ENCODE measurements at regions of chr20 and their contacts with region 1.

Region 1: DNA sequence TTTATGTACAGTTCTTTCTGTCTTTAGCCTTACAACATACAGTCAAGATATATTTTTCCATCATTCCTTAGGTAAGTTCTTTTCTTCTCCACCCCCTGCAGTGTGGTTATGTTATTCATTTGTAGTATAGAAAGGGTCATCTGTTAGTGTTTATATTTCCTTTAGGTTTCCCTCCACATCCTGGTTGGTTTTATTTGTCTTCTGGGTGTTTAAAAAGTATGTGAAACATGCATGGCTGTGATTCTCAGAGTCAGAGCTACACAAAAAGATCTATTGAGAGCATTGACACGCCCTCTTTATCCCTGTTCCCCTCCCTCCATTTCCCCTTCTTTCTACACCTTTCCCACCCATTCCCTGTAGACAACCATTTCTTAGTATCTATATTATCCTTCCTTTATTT is 20.2 kb downstream of the DHX35 start:
- DNase-seq: peak; percentile 90
- ATAC-seq: peak; percentile 60
- H3K4me3 ChIP-seq: no peak overlapping the region
- H3K27ac ChIP-seq: peak overlapping the region; percentile 30
- H3K4me1 ChIP-seq: peaks cover 68% of the 10 kb centered on the region
- H3K27me3 ChIP-seq: no peaks in the 10 kb centered on the region
- CTCF ChIP-seq: no peak
- EP300 ChIP-seq: peak in 1 of 2 experiments; percentile 37; a peak in 1 of 4 replicates
- POLR2A ChIP-seq: no peak
- RAD21 ChIP-seq: no peak

Region 2: GRCh38 chr20:38999965-39000910 is 17.9 kb after region 1 on chr20:
- CTCF ChIA-PET with region 1: no interaction called
- POLR2A ChIA-PET with region 1: interaction called, 6 read pairs
- in situ Hi-C with region 1: no loop called
- intact Hi-C with region 1: loop called (anchors 2 kb)
- DNase-seq: peak; percentile 82
- ATAC-seq: peak; percentile 69
- H3K4me3 ChIP-seq: no peak overlapping the region
- H3K27ac ChIP-seq: peak overlapping the region; percentile 70
- H3K4me1 ChIP-seq: peaks cover 50% of the 10 kb centered on the region
- H3K27me3 ChIP-seq: no peaks in the 10 kb centered on the region
- CTCF ChIP-seq: no peak
- EP300 ChIP-seq: peak in 1 of 2 experiments; percentile 77; a peak in 2 of 4 replicates
- POLR2A ChIP-seq: no peak
- RAD21 ChIP-seq: no peak

Measured in HepG2 (cell line).